ENCODE measurements at regions of chr12 and their contacts with region 1.

Region 1: DNA sequence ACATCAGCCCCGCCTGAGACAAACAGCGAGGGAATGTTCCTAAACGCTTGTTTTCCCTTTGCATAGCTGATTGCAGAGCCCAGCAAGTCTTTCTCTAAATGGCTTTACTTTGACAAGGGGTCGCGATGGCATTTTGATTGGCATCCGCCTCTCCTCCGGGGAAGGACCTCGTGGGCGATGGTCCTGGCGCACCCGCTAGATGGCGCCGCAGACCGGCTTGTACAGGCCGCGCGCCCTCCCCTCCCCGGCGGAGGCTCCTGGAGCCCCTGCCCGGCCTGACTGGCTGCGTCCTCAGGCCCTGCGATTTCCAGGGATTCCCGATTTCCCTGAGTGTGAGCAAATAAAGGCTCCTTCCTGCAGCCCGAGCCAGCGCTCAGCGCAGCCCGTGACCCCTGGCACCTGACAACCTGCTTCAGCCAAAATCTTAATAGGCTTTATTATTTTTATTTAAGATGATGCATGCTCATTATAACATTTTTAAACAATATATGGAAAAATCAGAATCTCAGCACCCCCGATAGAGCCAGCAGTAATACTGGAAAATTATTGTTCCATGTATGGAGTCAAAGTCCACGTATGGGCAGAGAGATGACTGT is 468.3 kb downstream of the AACS start:
- DNase-seq: no peak
- ATAC-seq: peak; percentile 94
- H3K4me3 ChIP-seq: no peak overlapping the region
- H3K27ac ChIP-seq: no peak overlapping the region
- H3K4me1 ChIP-seq: no peaks in the 10 kb centered on the region
- H3K27me3 ChIP-seq: no peaks in the 10 kb centered on the region
- CTCF ChIP-seq: peak; percentile 64 to 66 (median 66)
- EP300 ChIP-seq: no peak
- POLR2A ChIP-seq: no peak
- RAD21 ChIP-seq: peak; percentile 63

Region 2: GRCh38 chr12:125330645-125331341 is 202.7 kb before region 1 on chr12:
- CTCF ChIA-PET with region 1: interaction called, 9 read pairs
- POLR2A ChIA-PET with region 1: no interaction called
- RAD21 ChIA-PET with region 1: interaction called, 3 read pairs
- SMC1A ChIA-PET with region 1: no interaction called
- in situ Hi-C with region 1: no loop called
- intact Hi-C with region 1: loop called (anchors 10 kb)
- DNase-seq: no peak
- ATAC-seq: peak; percentile 99
- H3K4me3 ChIP-seq: no peak overlapping the region
- H3K27ac ChIP-seq: no peak overlapping the region
- H3K4me1 ChIP-seq: no peaks in the 10 kb centered on the region
- H3K27me3 ChIP-seq: no peaks in the 10 kb centered on the region; a peak in 2 of 4 replicates
- CTCF ChIP-seq: peak; percentile 76 to 90 (median 82)
- EP300 ChIP-seq: no peak
- POLR2A ChIP-seq: no peak
- RAD21 ChIP-seq: peak; percentile 85

Region 3: DNA sequence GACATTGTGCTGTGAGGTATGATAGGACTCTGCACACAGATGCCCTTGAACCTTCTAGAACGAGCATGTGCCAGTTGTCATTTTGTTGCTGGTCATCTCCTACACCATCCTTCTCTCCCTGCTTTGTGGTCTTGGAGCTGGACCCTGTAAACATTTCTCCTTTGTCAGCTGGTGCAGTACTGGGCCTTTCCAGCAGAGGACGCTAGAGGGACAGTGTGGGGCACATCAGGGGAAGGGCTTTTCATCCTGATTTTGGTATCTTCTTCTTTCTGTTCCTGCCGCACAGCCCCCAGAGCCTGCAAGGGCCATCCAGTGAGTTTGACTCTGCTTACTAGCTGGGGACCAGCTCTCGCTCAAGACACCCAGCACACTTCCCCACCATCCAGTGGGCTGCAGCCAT is 16.3 kb after region 1 on chr12:
- CTCF ChIA-PET with region 1: interaction called, 10 read pairs
- POLR2A ChIA-PET with region 1: no interaction called
- RAD21 ChIA-PET with region 1: no interaction called
- SMC1A ChIA-PET with region 1: interaction called, 4 read pairs
- in situ Hi-C with region 1: no loop called
- intact Hi-C with region 1: no loop called
- DNase-seq: no peak
- ATAC-seq: no peak
- H3K4me3 ChIP-seq: no peak overlapping the region
- H3K27ac ChIP-seq: no peak overlapping the region
- H3K4me1 ChIP-seq: no peaks in the 10 kb centered on the region
- H3K27me3 ChIP-seq: no peaks in the 10 kb centered on the region
- CTCF ChIP-seq: peak; percentile 36 to 62 (median 61); a peak in 4 of 6 replicates
- EP300 ChIP-seq: no peak
- POLR2A ChIP-seq: no peak
- RAD21 ChIP-seq: 0 out of 2 replicates have a peak, but pooled peaks have one; percentile 26

Region 4: DNA sequence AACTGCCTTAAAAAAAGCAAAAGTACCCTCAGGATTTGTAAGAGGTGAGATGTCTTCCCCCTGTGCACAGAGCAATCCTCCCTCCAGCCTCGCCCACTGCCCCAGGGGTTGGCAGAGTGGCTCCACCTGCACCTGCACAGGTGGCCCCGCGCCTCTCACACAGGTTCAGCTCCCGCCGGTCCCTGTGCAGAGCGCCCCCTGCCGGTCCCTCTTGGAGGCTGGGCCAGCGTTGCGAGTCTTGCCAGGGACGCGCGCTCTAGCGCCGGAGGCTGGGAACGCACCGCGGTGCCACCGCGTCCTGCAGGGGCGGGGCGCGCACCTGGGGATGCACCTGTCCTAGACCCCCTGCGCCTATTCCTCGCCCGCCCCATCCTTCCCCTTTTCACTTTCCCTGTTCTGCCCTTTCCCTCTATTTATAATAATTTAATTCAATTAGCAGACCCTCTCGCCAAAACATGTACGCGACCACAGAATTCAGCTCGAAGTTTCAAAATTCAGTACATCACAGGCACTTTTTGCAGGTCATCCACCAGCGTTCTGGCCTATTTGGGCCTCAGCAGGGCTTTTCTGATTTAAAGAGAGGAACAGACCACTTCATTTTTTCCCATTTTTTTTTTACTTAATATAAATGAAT is 150.3 kb after region 1 on chr12:
- CTCF ChIA-PET with region 1: interaction called, 18 read pairs
- POLR2A ChIA-PET with region 1: no interaction called
- RAD21 ChIA-PET with region 1: interaction called, 4 read pairs
- SMC1A ChIA-PET with region 1: interaction called, 5 read pairs
- in situ Hi-C with region 1: no loop called
- intact Hi-C with region 1: loop called (anchors 2 kb)
- DNase-seq: no peak
- ATAC-seq: peak; percentile 96
- H3K4me3 ChIP-seq: no peak overlapping the region
- H3K27ac ChIP-seq: no peak overlapping the region
- H3K4me1 ChIP-seq: no peaks in the 10 kb centered on the region
- H3K27me3 ChIP-seq: no peaks in the 10 kb centered on the region
- CTCF ChIP-seq: peak; percentile 59 to 76 (median 65)
- EP300 ChIP-seq: no peak
- POLR2A ChIP-seq: no peak
- RAD21 ChIP-seq: peak; percentile 62

Region 5: DNA sequence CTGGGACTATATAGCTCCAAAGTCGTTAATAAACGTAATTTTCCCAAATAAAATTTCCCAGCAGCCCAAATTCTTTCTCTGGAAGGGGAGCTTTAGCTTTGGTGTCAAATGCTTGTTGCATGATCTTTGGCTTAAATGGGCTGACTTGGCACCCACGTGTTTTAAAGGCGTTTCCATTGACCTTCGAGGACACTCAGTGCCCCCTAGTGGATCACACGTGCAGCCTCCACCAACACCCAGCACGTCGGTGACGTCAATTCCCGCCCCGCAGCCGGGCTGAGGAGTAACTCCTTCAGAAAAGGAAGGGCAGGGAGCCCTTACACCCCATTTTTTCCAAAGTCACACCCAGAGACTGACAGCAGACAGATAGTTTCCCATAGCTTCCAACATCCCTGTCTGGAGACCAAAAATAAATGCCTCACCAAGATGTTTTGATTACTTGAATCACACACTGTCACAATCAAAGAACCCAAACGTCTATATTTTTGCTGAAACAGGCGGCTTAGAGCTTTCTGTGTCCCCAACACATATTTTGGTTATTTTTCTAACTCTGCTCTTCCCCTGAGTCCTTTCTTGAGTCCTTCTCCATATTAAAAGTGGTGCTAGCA is 239.6 kb after region 1 on chr12:
- CTCF ChIA-PET with region 1: interaction called, 6 read pairs
- POLR2A ChIA-PET with region 1: no interaction called
- RAD21 ChIA-PET with region 1: no interaction called
- SMC1A ChIA-PET with region 1: interaction called, 4 read pairs
- in situ Hi-C with region 1: no loop called
- intact Hi-C with region 1: loop called (anchors 1 kb)
- DNase-seq: no peak
- ATAC-seq: peak; percentile 76
- H3K4me3 ChIP-seq: no peak overlapping the region
- H3K27ac ChIP-seq: no peak overlapping the region
- H3K4me1 ChIP-seq: no peaks in the 10 kb centered on the region
- H3K27me3 ChIP-seq: no peaks in the 10 kb centered on the region
- CTCF ChIP-seq: peak; percentile 46 to 52 (median 50); a peak in 5 of 6 replicates
- EP300 ChIP-seq: no peak
- POLR2A ChIP-seq: no peak
- RAD21 ChIP-seq: peak; percentile 47

Region 6: GRCh38 chr12:126874427-126875026 is 1341.0 kb after region 1 on chr12:
- CTCF ChIA-PET with region 1: interaction called, 6 read pairs
- POLR2A ChIA-PET with region 1: no interaction called
- RAD21 ChIA-PET with region 1: no interaction called
- SMC1A ChIA-PET with region 1: no interaction called
- in situ Hi-C with region 1: loop called (anchors 10 kb)
- intact Hi-C with region 1: loop called (anchors 5 kb)
- DNase-seq: peak; percentile 1
- ATAC-seq: peak; percentile 99
- H3K4me3 ChIP-seq: no peak overlapping the region
- H3K27ac ChIP-seq: no peak overlapping the region
- H3K4me1 ChIP-seq: no peaks in the 10 kb centered on the region
- H3K27me3 ChIP-seq: no peaks in the 10 kb centered on the region
- CTCF ChIP-seq: peak; percentile 87 to 90 (median 88)
- EP300 ChIP-seq: no peak
- POLR2A ChIP-seq: no peak
- RAD21 ChIP-seq: peak; percentile 85